Activated naive CD4-positive, alpha-beta T cell treated with anti-CD3 and anti-CD28 coated beads for 36 hours (primary cell): ENCODE measurements at regions of chr7 and their contacts with region 1.

Region 1: DNA sequence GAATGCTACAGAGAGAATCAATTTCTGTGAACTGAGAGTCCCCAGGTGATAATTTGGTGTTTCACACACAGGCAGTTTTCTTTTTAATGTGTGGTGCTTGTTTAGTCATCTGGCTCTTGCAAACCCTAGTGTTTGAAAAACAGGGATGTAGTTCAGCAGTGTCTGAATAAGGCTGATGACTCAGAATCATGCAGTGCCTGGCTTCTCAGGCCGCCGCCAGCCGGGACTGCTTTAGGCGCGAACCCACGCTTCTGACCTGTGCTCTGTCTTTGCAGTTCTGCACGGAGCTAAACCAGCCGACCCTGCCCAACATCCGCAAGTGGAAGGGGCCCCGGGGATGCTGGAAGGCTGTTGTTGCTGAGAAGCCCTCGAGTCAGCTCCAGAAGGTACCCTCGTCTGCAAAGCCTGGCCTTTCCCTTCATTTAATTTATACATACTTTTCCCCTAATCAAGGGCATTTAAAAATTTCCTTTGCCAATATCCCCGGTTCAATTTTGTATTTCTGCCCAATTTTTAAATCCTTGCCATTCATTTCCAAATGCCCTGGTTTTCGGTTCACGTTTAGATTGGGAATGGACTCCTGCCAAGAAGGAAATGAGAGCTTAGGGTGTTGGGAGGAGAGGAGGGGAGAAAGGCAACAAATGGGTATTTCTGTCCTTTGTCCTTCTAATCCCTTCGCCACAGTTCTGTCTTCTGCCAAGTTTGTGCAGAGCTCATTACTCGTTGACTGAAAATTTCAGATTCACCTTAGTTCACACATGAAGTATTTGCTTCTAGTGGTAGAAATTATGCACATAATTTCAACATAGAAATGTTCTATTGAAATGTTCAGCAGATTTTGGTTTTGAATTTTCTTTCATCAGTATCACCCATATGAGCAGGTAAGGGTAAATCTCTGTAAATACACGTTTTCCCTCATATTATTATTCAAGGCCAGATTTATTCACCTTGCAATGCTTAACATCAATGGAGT is 108.5 kb upstream of the ANLN start:
- DNase-seq: no peak
- H3K4me3 Mint-ChIP-seq: no peak overlapping the region
- H3K27ac Mint-ChIP-seq: no peak overlapping the region
- H3K4me1 Mint-ChIP-seq: peaks cover 15% of the 10 kb centered on the region
- H3K27me3 Mint-ChIP-seq: no peaks in the 10 kb centered on the region

Region 2: DNA sequence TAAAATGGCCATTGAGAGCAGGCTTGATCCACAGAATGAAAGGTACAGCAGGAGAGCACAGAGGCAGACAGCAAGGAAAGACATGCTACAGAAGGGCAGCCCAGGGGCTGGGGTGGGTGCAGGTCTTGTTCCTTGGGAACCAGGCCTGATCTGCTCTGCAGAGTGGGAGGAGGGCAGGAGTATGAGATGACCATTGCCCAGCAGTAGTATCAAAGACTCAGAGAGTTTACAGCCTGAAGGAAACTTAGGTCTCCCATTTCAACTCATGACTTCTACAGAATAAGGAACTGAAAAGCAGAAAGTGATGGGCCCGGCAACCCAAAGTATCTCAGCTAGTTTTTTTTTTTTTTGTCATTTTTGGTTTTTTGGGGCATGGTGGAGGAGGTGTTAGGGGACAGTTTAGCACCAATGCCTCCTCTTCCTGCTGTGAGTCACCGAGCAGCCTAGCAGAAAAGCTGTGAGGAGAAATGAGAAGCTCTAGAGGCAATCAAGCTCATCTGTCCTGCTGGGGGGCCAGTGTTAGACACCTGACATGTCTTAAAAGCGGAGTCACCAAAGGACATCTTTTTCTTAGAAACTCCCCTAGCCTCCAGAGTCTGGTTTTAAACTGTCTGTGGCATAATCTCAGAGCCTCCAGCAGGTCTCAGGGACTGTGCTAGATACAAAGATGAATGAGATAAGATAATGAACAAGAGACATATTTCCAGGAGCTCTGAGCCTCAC is 551.9 kb before region 1 on chr7:
- CTCF ChIA-PET with region 1: no interaction called
- intact Hi-C with region 1: loop called (anchors 10 kb)
- DNase-seq: peak; percentile 47
- H3K4me3 Mint-ChIP-seq: no peak overlapping the region
- H3K27ac Mint-ChIP-seq: no peak overlapping the region
- H3K4me1 Mint-ChIP-seq: peaks cover 41% of the 10 kb centered on the region
- H3K27me3 Mint-ChIP-seq: no peaks in the 10 kb centered on the region